ENCODE measurements at regions of chr1 and their contacts with region 1.

Region 1: DNA sequence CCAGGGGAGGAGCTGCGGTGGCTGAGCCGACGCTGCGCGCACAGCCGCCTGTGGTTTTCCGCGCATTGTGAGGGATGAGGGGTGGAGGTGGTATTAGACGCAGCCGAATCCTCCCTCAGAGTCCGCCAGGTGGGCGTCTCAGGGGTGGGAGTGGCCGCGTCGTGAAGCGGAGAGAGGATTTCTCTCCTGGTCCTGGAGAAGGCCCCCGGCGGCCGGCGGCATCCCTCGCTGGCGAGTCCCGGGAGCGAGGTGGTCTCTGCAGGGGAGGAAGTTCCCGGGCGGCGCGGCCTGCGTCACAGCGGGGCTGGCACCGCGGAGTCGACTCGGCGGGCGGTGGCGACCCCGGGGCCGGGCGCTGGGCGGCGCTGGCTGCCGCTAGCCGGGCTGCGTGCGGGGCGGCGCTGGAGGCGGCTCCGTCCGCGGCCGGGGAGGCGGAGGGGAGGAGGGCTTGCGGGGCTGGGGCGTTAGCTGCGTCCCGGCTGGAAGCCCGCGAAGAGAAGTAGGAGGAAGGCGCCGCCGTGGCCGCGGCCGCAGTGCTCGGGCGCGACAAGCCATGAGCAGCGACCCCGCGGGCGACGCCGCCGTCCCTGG is at the start of gene LRRC8C:
- DNase-seq: peak; percentile 95
- total RNA-seq, gene LRRC8C: 8.3 TPM

Region 2: DNA sequence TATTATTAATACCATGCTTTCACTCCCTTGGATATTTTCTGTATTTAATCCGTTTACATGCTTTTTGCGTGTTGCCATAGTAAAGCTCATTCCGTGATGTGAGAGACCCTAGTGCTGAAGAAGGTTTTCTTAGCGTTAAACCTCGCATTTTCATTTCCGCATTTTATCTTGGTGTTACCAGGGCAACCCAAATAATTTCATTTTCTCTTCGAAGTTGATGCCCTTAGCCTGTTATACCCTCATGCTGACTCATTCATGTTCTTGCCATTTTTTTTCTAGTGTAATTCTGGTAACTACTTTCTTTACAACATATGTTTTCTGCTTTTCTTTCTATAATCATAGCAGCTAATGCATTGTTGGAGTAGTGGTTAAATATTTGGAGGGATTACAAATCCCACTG is 37.4 kb after region 1 on chr1:
- intact Hi-C with region 1: no loop called
- DNase-seq: no peak

Region 3: GRCh38 chr1:89692601-89693521 is 60.1 kb after region 1 on chr1:
- intact Hi-C with region 1: loop called (anchors 5 kb)
- DNase-seq: no peak

Region 4: DNA sequence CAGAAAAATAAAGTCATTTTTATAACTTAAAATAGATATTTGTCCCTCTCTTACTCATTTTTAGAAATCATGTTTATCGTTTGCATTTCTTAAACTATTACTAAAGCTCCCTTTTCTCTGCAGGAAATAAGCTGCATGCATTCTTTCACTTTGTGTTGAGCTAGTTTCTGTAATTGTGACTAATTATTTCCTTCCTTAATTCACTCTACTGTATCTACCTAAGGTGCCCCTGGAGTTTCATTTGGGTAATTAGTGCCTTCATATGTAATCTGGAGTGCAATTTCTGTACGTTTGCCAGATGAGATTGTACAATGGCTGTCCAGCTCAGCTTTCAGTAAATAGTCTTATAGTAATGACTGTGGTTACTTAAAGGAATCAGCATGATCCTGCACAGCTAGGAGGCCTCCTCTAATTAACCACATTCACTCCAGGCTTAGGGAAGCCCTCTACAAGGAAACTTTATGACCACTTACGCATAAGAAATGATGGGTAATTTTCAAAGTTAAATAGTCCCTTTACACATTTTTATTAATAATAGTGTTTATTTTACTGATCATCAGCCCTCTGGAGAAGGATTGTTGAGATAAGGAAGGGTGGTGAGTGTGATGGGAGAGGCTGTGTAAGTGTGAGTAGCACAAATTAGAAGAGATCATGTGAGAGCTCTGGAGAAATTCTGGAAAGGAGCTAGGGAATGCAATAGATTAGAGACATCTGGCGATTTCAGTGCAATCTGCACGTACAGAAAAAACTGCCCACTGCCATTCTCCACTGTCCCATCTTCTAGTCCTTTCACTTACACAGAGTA is 87.0 kb after region 1 on chr1:
- intact Hi-C with region 1: loop called (anchors 5 kb)
- DNase-seq: no peak

Region 5: GRCh38 chr1:89762779-89763648 is 130.3 kb after region 1 on chr1:
- intact Hi-C with region 1: loop called (anchors 1 kb)
- DNase-seq: peak; percentile 95

Region 6: GRCh38 chr1:89994805-89995597 is 362.2 kb after region 1 on chr1 and contains the start of gene ZNF326:
- intact Hi-C with region 1: loop called (anchors 10 kb)
- DNase-seq: peak; percentile 98
- total RNA-seq, gene ZNF326: 14.0 TPM